ENCODE measurements at regions of chr1 and their contacts with region 1.

Region 1: GRCh38 chr1:66124670-66125069 is 332.0 kb downstream of the PDE4B start:
- DNase-seq: no peak
- H3K4me3 ChIP-seq: no peak overlapping the region
- H3K27ac ChIP-seq: no peak overlapping the region
- H3K4me1 ChIP-seq: no peaks in the 10 kb centered on the region
- H3K27me3 ChIP-seq: peaks cover 0 to 5% of the 10 kb centered on the region in 2 experiments
- CTCF ChIP-seq: no peak
- POLR2A ChIP-seq: no peak

Region 2: GRCh38 chr1:65958561-65959350 is 165.9 kb before region 1 on chr1:
- CTCF ChIA-PET with region 1: no interaction called
- POLR2A ChIA-PET with region 1: no interaction called
- dilution Hi-C with region 1: no loop called
- intact Hi-C with region 1: no loop called
- DNase-seq: peak; percentile 73
- H3K4me3 ChIP-seq: no peak overlapping the region
- H3K27ac ChIP-seq: no peak overlapping the region
- H3K4me1 ChIP-seq: peaks cover 10% of the 10 kb centered on the region
- H3K27me3 ChIP-seq: no peaks in the 10 kb centered on the region
- CTCF ChIP-seq: peak; percentile 21 to 29
- POLR2A ChIP-seq: no peak

Region 3: GRCh38 chr1:66035616-66036245 is 88.9 kb before region 1 on chr1:
- CTCF ChIA-PET with region 1: no interaction called
- POLR2A ChIA-PET with region 1: no interaction called
- dilution Hi-C with region 1: no loop called
- intact Hi-C with region 1: loop called (anchors 5 kb)
- DNase-seq: no peak
- H3K4me3 ChIP-seq: no peak overlapping the region
- H3K27ac ChIP-seq: no peak overlapping the region
- H3K4me1 ChIP-seq: no peaks in the 10 kb centered on the region
- H3K27me3 ChIP-seq: no peaks in the 10 kb centered on the region
- CTCF ChIP-seq: no peak
- POLR2A ChIP-seq: no peak

Measured in endothelial cell of umbilical vein (primary cell).